Prostate gland (tissue), 2 donors: ENCODE measurements at regions of chr6 and their contacts with region 1.

Region 1: DNA sequence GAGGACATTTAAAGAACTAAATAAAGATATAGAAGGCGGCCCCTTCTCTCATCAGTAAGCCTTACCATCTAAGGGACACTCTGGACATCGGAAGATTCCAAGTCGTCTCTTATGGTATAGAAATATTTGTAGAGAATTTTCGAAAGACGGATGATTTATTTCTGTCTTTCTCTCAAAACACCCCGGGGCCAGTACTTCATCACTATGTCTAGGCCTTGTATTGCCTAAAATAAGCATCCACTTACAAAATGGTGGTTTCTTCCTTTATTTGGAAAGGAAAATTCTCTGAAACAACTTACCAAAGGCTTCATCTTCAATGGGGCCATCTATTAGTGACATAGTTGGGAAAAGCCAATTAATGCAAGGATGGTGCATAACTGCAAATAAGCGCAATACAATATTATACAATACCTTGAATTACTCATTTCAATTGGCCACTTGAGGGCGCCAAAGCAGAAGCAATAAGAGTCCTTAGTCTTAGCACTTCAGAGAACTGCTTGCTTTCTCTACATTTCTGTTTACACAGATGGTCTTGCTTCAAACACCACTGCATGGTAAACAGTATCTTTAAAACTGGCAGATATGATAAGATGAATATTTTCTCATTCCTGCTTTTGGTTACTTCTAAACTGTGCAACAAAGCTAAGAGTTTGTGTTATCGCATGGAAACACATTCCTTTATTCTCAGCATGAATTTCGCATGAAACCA is 113.2 kb downstream of the VIP start:
- DNase-seq: peak; percentile 69
- H3K4me3 ChIP-seq: no peak overlapping the region
- H3K27ac ChIP-seq: no peak overlapping the region
- H3K4me1 ChIP-seq: no peaks in the 10 kb centered on the region
- H3K27me3 ChIP-seq: no peaks in the 10 kb centered on the region
- CTCF ChIP-seq: peak; percentile 27 to 67 (median 60)
- POLR2A ChIP-seq: no peak

Region 2: GRCh38 chr6:152948150-152948768 is 84.5 kb after region 1 on chr6:
- intact Hi-C with region 1: loop called (anchors 10 kb)
- DNase-seq: no peak
- H3K4me3 ChIP-seq: no peak overlapping the region
- H3K27ac ChIP-seq: no peak overlapping the region
- H3K4me1 ChIP-seq: no peaks in the 10 kb centered on the region
- H3K27me3 ChIP-seq: no peaks in the 10 kb centered on the region
- CTCF ChIP-seq: peak in 3 of 4 experiments; percentile 43 to 62 (median 49)
- POLR2A ChIP-seq: no peak

Region 3: GRCh38 chr6:153024709-153025017 is 160.9 kb after region 1 on chr6:
- intact Hi-C with region 1: loop called (anchors 5 kb)
- DNase-seq: no peak
- H3K4me3 ChIP-seq: no peak overlapping the region
- H3K27ac ChIP-seq: no peak overlapping the region
- H3K4me1 ChIP-seq: no peaks in the 10 kb centered on the region
- H3K27me3 ChIP-seq: no peaks in the 10 kb centered on the region
- CTCF ChIP-seq: no peak
- POLR2A ChIP-seq: no peak